Mammary epithelial cell (primary cell): ENCODE measurements at regions of chr15 and their contacts with region 1.

Region 1: GRCh38 chr15:68666120-68666811 is 87.5 kb downstream of the CORO2B start:
- DNase-seq: no peak
- H3K4me3 ChIP-seq: no peak overlapping the region
- H3K27ac ChIP-seq: no peak overlapping the region
- H3K4me1 ChIP-seq: no peaks in the 10 kb centered on the region
- H3K27me3 ChIP-seq: no peaks in the 10 kb centered on the region
- CTCF ChIP-seq: no peak

Region 2: GRCh38 chr15:68431792-68432401 is 234.4 kb before region 1 on chr15 and contains the start of gene ITGA11:
- CTCF ChIA-PET with region 1: no interaction called
- dilution Hi-C with region 1: no loop called
- in situ Hi-C with region 1: no loop called
- intact Hi-C with region 1: no loop called
- DNase-seq: peak; percentile 54
- H3K4me3 ChIP-seq: peak within 1 kb of the TSS in 2 of 3 experiments; percentile 22 to 48
- H3K27ac ChIP-seq: no peak within 1 kb of the TSS
- H3K4me1 ChIP-seq: peaks cover 16% of the 10 kb centered on the region
- H3K27me3 ChIP-seq: peaks cover 15% of the 10 kb centered on the region
- CTCF ChIP-seq: no peak
- total RNA-seq, gene ITGA11: 0.05 to 0.67 TPM

Region 3: GRCh38 chr15:68626739-68627138 is 39.5 kb before region 1 on chr15:
- CTCF ChIA-PET with region 1: no interaction called
- dilution Hi-C with region 1: loop called (anchors 5 kb)
- in situ Hi-C with region 1: no loop called
- intact Hi-C with region 1: no loop called
- DNase-seq: peak; percentile 53
- H3K4me3 ChIP-seq: no peak overlapping the region
- H3K27ac ChIP-seq: no peak overlapping the region
- H3K4me1 ChIP-seq: peaks cover 6% of the 10 kb centered on the region
- H3K27me3 ChIP-seq: no peaks in the 10 kb centered on the region
- CTCF ChIP-seq: no peak